Breast epithelium (tissue), 4 donors: ENCODE measurements at regions of chr11 and their contacts with region 1.

Region 1: DNA sequence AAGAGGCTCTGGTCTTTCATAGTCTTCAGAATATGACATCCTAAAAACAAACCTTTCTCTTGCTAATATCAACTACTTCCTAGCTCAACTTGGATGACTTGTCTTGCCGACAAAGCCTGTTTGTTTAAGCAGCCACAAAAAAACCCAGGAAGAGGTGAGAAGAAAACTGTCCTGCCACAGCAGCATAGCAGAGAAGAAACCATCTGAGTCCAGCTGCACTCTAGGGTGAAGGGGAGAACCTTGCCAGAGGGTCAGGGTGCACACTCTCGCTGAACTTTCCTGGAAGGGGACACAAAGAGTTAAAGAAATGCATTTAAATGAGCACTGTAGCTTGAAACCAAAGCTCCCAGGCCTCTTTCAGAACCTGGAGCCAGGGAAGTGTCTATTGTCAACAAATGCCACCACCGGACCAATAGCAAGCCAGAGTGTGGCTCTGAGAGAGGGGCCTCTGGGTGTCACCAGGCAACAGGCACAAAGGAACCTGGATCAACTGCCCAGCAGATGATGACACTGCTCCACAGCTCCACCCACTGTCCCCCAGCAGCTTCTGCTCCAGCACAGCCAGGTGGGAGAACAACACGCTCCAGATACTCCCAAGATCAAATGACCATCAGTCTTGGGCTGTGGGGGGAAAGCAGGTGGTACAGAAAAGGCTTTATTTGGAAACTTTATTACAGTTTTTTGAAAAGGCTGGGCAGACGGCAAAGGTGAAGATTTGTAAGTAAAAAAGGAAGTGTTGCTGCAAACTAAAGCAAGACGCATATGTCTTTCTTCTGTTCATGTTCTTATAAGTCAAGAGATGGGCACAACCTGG is 105.7 kb downstream of the RASSF10 start:
- DNase-seq: peak; percentile 29 to 61
- H3K4me3 ChIP-seq: no peak overlapping the region
- H3K27ac ChIP-seq: peak overlapping the region in 1 of 2 donors; percentile 44
- H3K4me1 ChIP-seq: no peaks in the 10 kb centered on the region
- H3K27me3 ChIP-seq: no peaks in the 10 kb centered on the region
- CTCF ChIP-seq: peak in 1 of 3 donors; percentile 13
- POLR2A ChIP-seq: no peak

Region 2: DNA sequence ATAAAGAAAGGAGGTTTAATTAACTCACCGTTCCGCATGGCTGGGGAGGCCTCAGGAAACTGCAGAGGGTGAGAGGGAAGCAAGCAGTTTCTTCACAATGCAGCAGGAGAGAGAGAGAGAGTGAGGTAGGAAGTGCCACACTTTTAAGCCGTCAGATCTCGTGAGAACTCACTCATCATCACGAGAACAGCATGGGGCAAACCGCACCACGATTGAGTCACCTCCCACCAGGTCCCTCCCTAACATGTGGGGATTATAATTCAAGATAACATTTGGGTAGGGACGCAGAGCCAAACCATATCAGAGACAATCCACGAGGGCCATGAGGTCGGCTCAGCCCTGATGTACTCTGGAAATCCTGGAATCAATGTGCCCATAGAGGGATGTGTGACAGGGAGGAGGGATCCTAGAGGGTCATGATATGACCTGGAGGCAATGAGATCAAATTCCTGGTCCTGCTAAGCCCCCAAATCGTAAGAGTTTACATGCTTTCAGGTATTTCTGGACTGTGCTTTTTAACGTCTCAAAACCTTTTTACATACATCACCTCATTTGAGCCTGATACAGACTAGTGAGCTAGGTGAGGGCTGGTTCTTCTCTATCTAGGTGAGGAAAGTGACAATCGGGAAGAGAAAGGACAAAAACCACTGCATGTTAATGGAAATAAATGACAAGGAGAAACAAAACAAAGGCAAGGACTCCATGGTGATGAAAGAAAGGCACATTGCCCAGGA is 125.2 kb before region 1 on chr11:
- intact Hi-C with region 1: loop called (anchors 10 kb)
- DNase-seq: no peak
- H3K4me3 ChIP-seq: peak overlapping the region in 1 of 3 donors; percentile 19
- H3K27ac ChIP-seq: no peak overlapping the region
- H3K4me1 ChIP-seq: no peaks in the 10 kb centered on the region
- H3K27me3 ChIP-seq: no peaks in the 10 kb centered on the region
- CTCF ChIP-seq: no peak
- POLR2A ChIP-seq: no peak

Region 3: GRCh38 chr11:13091373-13091772 is 23.4 kb before region 1 on chr11:
- intact Hi-C with region 1: no loop called
- DNase-seq: no peak
- H3K4me3 ChIP-seq: no peak overlapping the region
- H3K27ac ChIP-seq: no peak overlapping the region
- H3K4me1 ChIP-seq: no peaks in the 10 kb centered on the region
- H3K27me3 ChIP-seq: no peaks in the 10 kb centered on the region
- CTCF ChIP-seq: no peak
- POLR2A ChIP-seq: no peak

Region 4: DNA sequence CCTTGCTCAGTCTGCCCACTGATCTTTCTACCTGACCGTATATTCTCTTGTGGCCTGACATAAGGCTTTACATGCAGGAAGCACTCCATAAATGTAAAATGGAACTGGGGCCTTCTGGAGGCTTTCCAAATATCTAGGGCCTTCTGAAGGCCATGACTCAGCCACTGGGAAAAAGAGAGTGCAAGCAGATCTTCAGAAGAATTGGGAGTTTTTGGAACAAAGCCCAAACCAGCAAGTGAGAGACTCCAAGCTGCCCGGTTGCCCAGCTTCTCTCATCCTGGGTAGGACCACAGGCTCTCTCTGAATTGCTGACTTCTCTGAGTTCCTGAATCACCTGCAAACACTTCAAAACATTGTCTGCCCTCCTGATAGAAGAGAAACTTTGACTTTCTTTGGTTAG is 54.9 kb after region 1 on chr11:
- intact Hi-C with region 1: no loop called
- DNase-seq: no peak
- H3K4me3 ChIP-seq: no peak overlapping the region
- H3K27ac ChIP-seq: no peak overlapping the region
- H3K4me1 ChIP-seq: peaks cover 0 to 4% of the 10 kb centered on the region in 2 donors
- H3K27me3 ChIP-seq: no peaks in the 10 kb centered on the region
- CTCF ChIP-seq: no peak
- POLR2A ChIP-seq: no peak

Region 5: GRCh38 chr11:13297917-13298356 is 183.2 kb after region 1 on chr11:
- intact Hi-C with region 1: no loop called
- DNase-seq: no peak
- H3K4me3 ChIP-seq: no peak overlapping the region
- H3K27ac ChIP-seq: no peak overlapping the region
- H3K4me1 ChIP-seq: no peaks in the 10 kb centered on the region
- H3K27me3 ChIP-seq: no peaks in the 10 kb centered on the region
- CTCF ChIP-seq: no peak
- POLR2A ChIP-seq: no peak